Activated naive CD4-positive, alpha-beta T cell treated with anti-CD3 and anti-CD28 coated beads for 36 hours (primary cell): ENCODE measurements at regions of chr1 and their contacts with region 1.

Region 1: GRCh38 chr1:2300851-2301606 is 72.9 kb downstream of the SKI start:
- DNase-seq: peak; percentile 96
- H3K4me3 Mint-ChIP-seq: peak overlapping the region; percentile 77
- H3K27ac Mint-ChIP-seq: peak overlapping the region; percentile 98
- H3K4me1 Mint-ChIP-seq: peaks cover 60% of the 10 kb centered on the region
- H3K27me3 Mint-ChIP-seq: no peaks in the 10 kb centered on the region

Region 2: DNA sequence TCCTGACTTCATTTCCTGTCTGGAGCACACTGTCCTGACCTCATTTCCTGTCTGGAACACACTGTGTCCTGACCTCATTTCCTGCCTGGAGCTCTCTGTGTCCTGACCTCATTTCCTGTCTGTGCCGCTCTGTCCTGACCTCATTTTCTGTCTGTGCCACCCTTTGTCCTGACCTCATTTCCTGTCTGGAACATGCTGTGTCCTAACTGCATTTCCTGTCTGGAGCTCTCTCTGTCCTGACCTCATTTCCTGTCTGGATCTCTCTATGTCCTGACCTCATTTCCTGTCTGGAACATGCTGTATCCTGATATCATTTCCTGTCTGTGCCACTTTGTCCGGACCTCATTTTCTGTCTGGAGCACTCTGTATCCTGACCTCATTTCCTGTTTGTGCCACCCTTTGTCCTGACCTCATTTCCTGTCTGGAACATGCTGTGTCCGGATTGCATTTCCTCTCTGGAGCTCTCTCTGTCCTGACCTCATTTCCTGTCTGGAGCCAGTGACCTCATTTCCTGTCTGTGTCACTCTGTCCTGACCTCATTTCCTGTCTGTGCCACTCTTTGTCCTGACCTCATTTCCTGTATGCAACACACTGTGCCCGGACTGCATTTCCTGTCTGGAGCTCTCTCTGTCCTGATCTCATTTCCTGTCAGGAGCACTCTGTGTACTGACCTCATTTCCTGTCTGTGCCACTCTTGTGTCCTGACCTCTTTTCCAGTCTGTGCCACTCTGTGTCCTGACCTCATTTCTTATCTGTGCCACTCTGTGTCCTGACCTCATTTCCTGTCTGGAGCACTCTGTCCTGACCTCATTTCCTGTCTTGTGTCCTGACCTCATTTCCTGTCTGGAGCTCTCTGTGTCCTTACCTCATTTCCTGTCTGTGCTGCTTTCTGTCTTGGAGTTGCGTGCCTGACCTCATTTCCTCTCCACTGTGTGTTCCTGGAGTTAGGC is 45.3 kb before region 1 on chr1:
- CTCF ChIA-PET with region 1: no interaction called
- intact Hi-C with region 1: loop called (anchors 1 kb)
- DNase-seq: peak; percentile 94
- H3K4me3 Mint-ChIP-seq: no peak overlapping the region
- H3K27ac Mint-ChIP-seq: no peak overlapping the region
- H3K4me1 Mint-ChIP-seq: peaks cover 66% of the 10 kb centered on the region
- H3K27me3 Mint-ChIP-seq: no peaks in the 10 kb centered on the region

Region 3: DNA sequence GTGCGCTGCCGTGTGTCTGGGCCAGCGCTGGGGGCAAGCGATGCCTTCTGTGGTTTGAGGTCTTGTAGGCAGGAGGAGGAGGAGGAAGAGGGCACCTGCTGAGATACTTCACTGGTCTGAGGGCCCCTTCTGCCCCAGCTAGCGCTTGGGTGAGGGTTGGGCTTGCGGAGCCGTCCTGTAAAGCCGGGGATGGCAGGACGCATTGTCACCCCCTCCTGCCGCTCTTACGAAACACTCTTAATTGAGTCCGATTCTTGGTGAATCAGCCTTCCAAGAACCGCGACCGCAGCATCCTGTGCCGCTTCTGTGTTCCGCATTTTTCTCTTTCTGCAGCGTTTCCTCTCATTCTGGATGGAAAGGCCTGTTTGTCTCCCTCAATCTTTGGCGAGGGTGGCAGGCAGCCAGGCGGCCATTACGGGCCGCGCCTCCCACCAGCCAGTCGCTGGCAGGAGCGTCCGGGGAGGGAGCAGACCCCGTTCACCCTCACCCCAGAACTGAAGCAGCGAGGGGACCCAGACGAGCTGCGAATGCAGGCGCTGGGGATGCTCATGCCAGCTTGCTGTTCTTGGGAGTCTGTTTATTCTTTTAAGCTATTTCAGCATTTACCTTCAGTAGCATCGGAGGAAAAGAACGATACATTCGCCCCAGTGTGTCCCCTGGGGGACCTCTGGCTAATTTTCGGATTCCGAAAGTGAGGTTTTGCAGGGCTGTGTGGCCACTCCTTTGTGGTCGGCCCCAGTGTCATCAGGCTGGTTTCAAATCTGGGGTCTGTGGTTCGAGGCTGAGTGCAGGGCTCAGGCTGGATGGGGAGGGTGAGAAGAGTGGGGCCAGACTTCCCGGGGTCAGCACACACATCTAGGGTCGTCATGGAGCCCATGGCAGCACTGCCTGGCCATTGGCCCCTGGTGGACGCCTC is 10.2 kb before region 1 on chr1:
- CTCF ChIA-PET with region 1: interaction called, 12 read pairs
- intact Hi-C with region 1: no loop called
- DNase-seq: peak; percentile 96
- H3K4me3 Mint-ChIP-seq: peak overlapping the region; percentile 72
- H3K27ac Mint-ChIP-seq: peak overlapping the region; percentile 99
- H3K4me1 Mint-ChIP-seq: peaks cover 84% of the 10 kb centered on the region
- H3K27me3 Mint-ChIP-seq: no peaks in the 10 kb centered on the region

Region 4: DNA sequence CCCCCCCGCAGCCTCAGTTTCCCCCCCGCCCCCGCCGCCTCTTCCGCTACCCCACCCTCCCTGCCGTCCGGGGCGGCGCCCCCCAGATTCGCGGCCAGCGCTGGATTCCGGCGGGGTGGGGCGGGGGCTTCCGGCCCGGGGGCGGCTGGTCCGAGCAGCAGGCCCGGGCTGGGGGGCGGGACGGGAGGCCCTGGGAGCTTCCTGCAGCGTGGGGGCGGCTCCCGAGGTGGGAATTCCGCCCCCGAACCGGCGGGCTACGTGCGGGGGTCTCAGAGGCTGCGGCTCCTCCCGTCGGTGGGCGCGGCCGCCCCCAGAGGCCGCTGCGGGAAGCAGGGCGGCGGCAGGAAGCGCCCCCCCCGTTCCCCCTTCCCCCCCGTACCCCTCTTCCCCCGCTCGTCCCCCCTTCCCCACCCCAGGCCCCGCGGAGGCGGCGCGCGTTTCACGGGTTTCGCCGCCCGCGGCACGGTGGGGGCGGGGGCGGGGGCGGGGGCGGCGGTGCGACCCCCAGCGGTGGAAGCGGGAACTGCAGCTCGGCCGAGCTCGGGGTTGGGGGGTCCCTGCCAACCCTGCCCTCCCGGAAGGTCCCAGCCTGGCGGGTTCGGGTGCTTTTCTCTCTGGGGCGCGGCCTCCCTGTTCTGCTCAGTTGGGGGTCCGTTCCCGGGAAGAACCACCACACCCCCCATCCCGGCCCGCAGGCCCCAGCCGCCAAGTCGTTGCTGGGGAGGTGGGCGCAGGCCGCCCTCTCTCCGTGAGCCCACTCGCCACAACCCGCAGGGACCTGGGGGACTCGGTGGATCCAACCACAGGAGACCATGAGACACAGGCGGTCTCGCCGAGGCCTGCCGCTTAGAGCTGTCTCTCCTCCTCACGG is 14.0 kb after region 1 on chr1:
- CTCF ChIA-PET with region 1: interaction called, 4 read pairs
- intact Hi-C with region 1: loop called (anchors 1 kb)
- DNase-seq: peak; percentile 54
- H3K4me3 Mint-ChIP-seq: peak overlapping the region; percentile 34
- H3K27ac Mint-ChIP-seq: peak overlapping the region; percentile 13
- H3K4me1 Mint-ChIP-seq: peaks cover 4% of the 10 kb centered on the region
- H3K27me3 Mint-ChIP-seq: no peaks in the 10 kb centered on the region

Region 5: GRCh38 chr1:2566101-2567045 is 265.3 kb after region 1 on chr1:
- CTCF ChIA-PET with region 1: no interaction called
- intact Hi-C with region 1: no loop called
- DNase-seq: no peak
- H3K4me3 Mint-ChIP-seq: no peak overlapping the region
- H3K27ac Mint-ChIP-seq: no peak overlapping the region
- H3K4me1 Mint-ChIP-seq: no peaks in the 10 kb centered on the region
- H3K27me3 Mint-ChIP-seq: no peaks in the 10 kb centered on the region